AG04449 (cell line): ENCODE measurements at regions of chr5 and their contacts with region 1.

Region 1: GRCh38 chr5:54517174-54518092 is at the start of gene SNX18:
- DNase-seq: peak; percentile 56
- H3K4me3 ChIP-seq: peak within 1 kb of the TSS; percentile 62
- CTCF ChIP-seq: peak; percentile 88

Region 2: GRCh38 chr5:53233652-53234405 is 1283.6 kb before region 1 on chr5:
- CTCF ChIA-PET with region 1: no interaction called
- POLR2A ChIA-PET with region 1: no interaction called
- DNase-seq: no peak
- H3K4me3 ChIP-seq: no peak overlapping the region
- CTCF ChIP-seq: no peak

Region 3: GRCh38 chr5:54254482-54255198 is 262.8 kb before region 1 on chr5:
- CTCF ChIA-PET with region 1: interaction called, 16 read pairs
- POLR2A ChIA-PET with region 1: no interaction called
- DNase-seq: no peak
- H3K4me3 ChIP-seq: no peak overlapping the region
- CTCF ChIP-seq: no peak

Region 4: GRCh38 chr5:54329731-54330709 is 187.4 kb before region 1 on chr5:
- CTCF ChIA-PET with region 1: no interaction called
- POLR2A ChIA-PET with region 1: no interaction called
- DNase-seq: peak; percentile 93
- H3K4me3 ChIP-seq: no peak overlapping the region
- CTCF ChIP-seq: no peak

Region 5: GRCh38 chr5:54610197-54610944 is 92.9 kb after region 1 on chr5:
- CTCF ChIA-PET with region 1: no interaction called
- POLR2A ChIA-PET with region 1: no interaction called
- DNase-seq: no peak
- H3K4me3 ChIP-seq: no peak overlapping the region
- CTCF ChIP-seq: no peak

Region 6: GRCh38 chr5:54832858-54833257 is 315.4 kb after region 1 on chr5:
- CTCF ChIA-PET with region 1: interaction called, 49 read pairs
- POLR2A ChIA-PET with region 1: interaction called, 4 read pairs
- DNase-seq: no peak
- H3K4me3 ChIP-seq: no peak overlapping the region
- CTCF ChIP-seq: no peak

Region 7: GRCh38 chr5:54852007-54852406 is 334.6 kb after region 1 on chr5:
- CTCF ChIA-PET with region 1: interaction called, 38 read pairs
- POLR2A ChIA-PET with region 1: no interaction called
- DNase-seq: no peak
- H3K4me3 ChIP-seq: no peak overlapping the region
- CTCF ChIP-seq: no peak

Region 8: GRCh38 chr5:54867310-54867944 is 350.0 kb after region 1 on chr5:
- CTCF ChIA-PET with region 1: interaction called, 137 read pairs
- POLR2A ChIA-PET with region 1: interaction called, 3 read pairs
- DNase-seq: no peak
- H3K4me3 ChIP-seq: no peak overlapping the region
- CTCF ChIP-seq: peak; percentile 9

Region 9: GRCh38 chr5:54895816-54896341 is 378.4 kb after region 1 on chr5:
- CTCF ChIA-PET with region 1: interaction called, 67 read pairs
- POLR2A ChIA-PET with region 1: interaction called, 3 read pairs
- DNase-seq: no peak
- H3K4me3 ChIP-seq: no peak overlapping the region
- CTCF ChIP-seq: peak; percentile 49

Region 10: DNA sequence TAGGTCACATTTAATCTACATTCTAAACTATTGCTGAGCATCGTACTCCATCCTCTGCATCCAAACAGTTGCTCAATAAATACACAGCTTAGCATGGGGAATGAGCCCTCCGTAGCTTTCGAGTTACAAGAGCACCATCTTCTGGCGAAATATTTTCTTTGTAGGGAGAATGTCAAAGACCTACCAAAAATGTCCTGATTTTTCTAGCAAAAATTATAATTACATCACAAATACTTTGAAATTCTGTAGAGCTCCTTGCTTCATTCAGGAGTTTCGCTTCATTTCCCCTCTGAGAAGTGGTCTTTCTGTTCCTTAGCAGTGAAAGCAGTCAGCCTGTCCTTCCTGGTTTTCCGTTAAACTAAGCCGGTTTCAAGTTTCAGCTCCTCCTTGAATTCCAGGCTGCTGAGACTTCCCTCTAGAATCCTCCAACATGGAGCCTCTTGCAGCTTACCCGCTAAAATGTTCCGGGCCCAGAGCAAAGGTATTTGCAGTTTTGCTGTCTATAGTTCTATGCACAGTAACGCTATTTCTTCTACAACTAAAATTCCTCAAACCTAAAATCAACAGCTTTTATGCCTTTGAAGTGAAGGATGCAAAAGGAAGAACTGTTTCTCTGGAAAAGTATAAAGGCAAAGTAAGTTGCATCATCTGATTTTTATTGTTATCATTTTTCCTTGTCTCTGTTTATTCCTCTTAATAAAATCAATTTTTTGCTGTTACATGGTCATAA is 642.5 kb after region 1 on chr5 and contains the start of gene GPX8:
- CTCF ChIA-PET with region 1: interaction called, 11 read pairs
- POLR2A ChIA-PET with region 1: no interaction called
- DNase-seq: peak; percentile 59
- H3K4me3 ChIP-seq: peak within 1 kb of the TSS; percentile 69
- CTCF ChIP-seq: peak; percentile 26